Heart left ventricle (tissue), 16 donors: ENCODE measurements at regions of chr1 and their contacts with region 1.

Region 1: DNA sequence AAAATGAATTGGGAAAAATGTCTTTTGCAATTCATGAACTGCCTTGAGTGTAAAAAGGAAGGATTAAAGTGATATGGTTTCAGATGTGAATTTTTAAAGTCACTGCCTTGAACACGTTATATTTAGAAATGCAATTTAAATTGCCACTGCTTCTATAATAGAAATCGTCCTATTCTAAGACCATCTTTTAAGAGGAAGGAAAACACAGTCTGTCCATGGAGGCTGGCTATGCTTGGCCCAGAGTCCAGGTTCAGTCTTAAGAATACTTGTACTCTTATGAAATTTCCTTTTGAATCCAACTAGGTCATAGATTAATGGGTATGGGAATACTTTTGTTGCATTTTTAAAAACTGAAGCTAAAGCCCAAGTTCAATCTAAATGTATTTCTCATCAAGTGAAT is 86.0 kb downstream of the PCNX2 start:
- DNase-seq: no peak
- ATAC-seq: no peak
- H3K4me3 ChIP-seq: no peak overlapping the region
- H3K27ac ChIP-seq: no peak overlapping the region
- H3K4me1 ChIP-seq: no peaks in the 10 kb centered on the region
- H3K27me3 ChIP-seq: no peaks in the 10 kb centered on the region
- CTCF ChIP-seq: no peak
- POLR2A ChIP-seq: no peak

Region 2: DNA sequence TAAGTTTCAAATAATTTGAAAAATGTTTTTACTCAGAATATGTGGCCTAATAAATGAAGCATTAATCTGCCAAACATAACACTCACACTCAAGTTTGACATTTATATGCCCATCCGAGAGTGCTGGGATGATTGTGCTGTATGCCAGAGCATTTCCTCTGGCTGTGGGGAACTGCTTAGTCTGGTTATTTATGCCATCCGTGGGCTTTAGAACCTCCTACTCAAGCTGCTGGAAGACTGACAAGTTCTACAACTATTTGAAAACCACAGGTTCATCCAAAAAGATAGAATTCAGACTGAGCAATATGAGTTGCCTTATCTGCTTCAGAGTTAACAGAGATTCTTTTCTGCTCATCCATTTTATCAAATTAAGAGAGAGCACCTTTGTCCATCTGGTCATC is 60.2 kb after region 1 on chr1:
- intact Hi-C with region 1: loop called in 1 of 10 experiments (anchors 10 kb)
- DNase-seq: no peak
- ATAC-seq: no peak
- H3K4me3 ChIP-seq: no peak overlapping the region
- H3K27ac ChIP-seq: no peak overlapping the region
- H3K4me1 ChIP-seq: no peaks in the 10 kb centered on the region
- H3K27me3 ChIP-seq: no peaks in the 10 kb centered on the region
- CTCF ChIP-seq: no peak
- POLR2A ChIP-seq: no peak